ENCODE measurements at regions of chr5 and their contacts with region 1.

Region 1: DNA sequence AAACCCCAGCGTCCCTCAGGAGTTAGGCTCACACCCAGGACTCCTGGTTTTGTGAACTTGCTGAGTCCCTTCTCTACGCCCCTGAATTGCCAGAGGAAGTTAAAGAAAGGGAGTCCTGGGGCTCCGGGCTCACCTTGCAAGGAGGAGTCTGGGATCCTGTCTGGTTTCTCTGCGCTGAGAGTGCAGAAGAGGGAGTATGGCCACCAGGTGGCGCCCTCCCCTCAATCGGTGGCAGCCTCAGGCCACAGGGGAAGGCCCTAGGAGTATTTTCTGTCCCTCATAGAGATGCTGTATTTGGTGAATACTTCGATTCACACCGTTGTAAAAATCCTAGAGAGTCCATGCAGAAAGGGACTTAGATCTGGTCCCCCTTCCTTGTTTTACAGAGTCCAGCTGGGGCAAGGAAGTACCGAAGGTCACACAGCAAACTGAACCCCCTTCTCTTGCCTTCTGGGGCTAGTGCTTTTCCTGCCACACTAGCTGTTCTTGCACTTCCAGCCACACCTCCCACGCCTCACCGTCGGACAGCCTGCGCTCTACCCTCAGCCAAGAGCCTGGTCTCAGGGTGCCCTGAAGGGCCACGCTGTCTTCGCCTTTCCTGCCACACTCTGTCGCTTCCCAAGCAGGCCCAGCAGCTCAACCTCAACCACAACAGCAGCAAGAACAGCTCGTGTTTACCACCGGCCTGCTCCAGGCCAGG is 10.2 kb downstream of the HAND1 start:
- DNase-seq: peak in 3 of 4 donors; percentile 68 to 95 (median 81)
- ATAC-seq: peak; percentile 98
- H3K4me3 ChIP-seq: no peak overlapping the region
- H3K27ac ChIP-seq: no peak overlapping the region
- H3K4me1 ChIP-seq: peaks cover 0 to 12% of the 10 kb centered on the region in 2 donors
- H3K27me3 ChIP-seq: peaks cover 37 to 52% of the 10 kb centered on the region in 2 donors
- CTCF ChIP-seq: peak; percentile 93 to 96

Region 2: GRCh38 chr5:154228696-154229095 is 239.1 kb before region 1 on chr5:
- intact Hi-C with region 1: no loop called
- DNase-seq: no peak
- ATAC-seq: no peak
- H3K4me3 ChIP-seq: no peak overlapping the region
- H3K27ac ChIP-seq: no peak overlapping the region
- H3K4me1 ChIP-seq: no peaks in the 10 kb centered on the region
- H3K27me3 ChIP-seq: no peaks in the 10 kb centered on the region
- CTCF ChIP-seq: no peak

Region 3: DNA sequence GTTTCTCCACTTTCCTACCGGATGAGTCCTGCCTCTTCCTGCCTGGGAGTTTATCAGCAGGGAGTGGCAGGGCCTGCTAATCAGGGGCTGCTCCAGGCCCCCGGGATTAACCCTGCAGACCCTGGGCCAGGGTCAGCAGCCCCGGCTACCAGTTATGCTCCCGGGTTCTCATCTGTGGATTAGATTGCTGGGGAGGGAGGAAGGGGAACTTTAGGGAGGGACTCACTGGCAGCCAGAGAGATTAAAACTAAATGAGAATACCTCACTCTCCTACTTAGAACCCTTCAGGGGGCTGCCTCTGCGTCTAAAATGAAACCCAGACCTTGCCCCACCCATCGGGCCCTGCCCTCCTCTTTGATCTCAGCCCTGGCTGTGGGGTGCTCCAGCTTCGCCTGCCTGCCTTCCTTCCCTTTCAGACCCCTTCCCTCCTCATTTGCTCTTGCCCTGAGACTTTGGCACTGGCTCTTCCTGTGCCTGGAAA is 140.8 kb after region 1 on chr5:
- intact Hi-C with region 1: loop called in 1 of 2 experiments (anchors 5 kb)
- DNase-seq: no peak
- ATAC-seq: no peak
- H3K4me3 ChIP-seq: no peak overlapping the region
- H3K27ac ChIP-seq: no peak overlapping the region
- H3K4me1 ChIP-seq: peaks cover 13 to 15% of the 10 kb centered on the region in 2 donors
- H3K27me3 ChIP-seq: peaks cover 22 to 87% of the 10 kb centered on the region in 2 donors
- CTCF ChIP-seq: no peak

Region 4: DNA sequence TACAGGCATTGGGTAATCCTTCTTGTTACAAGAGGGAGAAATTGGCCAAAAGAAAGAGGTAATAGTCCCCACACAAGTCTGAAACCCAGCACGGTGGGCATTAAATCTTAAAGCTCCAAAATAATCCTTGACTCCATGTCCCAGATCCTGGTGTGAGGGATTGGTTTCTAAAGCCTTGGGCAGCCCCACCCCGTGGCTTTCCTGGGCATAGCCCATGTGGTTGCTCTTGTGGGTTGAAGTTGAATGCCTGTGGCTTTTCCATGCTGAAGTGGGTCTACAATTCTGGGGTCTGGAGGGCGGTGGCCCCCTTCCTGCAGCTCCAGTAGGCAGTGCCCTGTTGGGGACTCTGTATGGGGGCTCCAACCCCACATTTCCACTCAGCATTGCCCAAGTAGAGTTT is 195.6 kb after region 1 on chr5:
- intact Hi-C with region 1: no loop called
- DNase-seq: no peak
- ATAC-seq: no peak
- H3K4me3 ChIP-seq: no peak overlapping the region
- H3K27ac ChIP-seq: no peak overlapping the region
- H3K4me1 ChIP-seq: no peaks in the 10 kb centered on the region
- H3K27me3 ChIP-seq: no peaks in the 10 kb centered on the region
- CTCF ChIP-seq: no peak